ENCODE measurements at regions of chrX and their contacts with region 1.

Region 1: GRCh38 chrX:154486396-154487207 is at the start of gene UBL4A:
- DNase-seq: no peak
- H3K4me3 ChIP-seq: peak within 1 kb of the TSS; percentile 46
- CTCF ChIP-seq: no peak

Region 2: DNA sequence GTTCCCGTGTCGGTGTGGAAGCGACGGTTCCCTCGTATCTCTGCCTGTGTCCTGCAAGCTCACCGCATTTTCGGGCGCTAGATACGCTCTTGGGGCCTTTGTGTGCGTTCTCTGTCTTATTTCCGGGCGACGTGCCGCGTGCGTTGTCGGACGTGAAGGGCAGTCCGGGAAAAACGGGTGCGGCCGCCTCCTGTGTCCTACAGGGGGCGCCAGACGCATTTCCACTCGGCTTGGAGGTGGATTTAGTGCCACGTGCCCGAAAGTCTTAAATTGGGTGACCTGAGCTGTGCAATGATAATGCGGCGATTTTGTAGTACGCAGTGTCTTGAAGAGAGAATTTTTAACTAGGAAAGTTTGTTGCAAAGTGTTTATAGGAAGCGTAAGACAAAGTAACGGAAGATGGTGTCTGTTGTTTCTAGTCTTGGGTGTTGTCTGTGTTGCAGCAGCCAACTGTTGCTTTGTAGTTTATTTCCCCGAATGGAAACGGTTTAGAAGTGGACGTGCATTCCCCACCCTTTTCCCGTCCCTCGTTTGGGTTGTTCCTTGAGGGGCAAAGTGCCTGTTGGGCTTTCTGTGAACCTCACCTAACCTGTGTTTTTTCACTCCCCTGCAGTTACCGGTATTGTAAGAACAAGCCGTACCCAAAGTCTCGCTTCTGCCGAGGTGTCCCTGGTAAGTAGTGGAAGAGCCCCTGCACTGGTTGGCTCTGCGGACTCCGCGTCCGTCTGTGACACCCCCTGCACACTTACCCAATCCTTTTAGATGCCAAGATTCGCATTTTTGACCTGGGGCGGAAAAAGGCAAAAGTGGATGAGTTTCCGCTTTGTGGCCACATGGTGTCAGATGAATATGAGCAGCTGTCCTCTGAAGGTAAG is 87.6 kb before region 1 on chrX:
- in situ Hi-C with region 1: no loop called
- DNase-seq: peak; percentile 69
- H3K4me3 ChIP-seq: peak overlapping the region; percentile 88
- CTCF ChIP-seq: peak; percentile 74

Region 3: DNA sequence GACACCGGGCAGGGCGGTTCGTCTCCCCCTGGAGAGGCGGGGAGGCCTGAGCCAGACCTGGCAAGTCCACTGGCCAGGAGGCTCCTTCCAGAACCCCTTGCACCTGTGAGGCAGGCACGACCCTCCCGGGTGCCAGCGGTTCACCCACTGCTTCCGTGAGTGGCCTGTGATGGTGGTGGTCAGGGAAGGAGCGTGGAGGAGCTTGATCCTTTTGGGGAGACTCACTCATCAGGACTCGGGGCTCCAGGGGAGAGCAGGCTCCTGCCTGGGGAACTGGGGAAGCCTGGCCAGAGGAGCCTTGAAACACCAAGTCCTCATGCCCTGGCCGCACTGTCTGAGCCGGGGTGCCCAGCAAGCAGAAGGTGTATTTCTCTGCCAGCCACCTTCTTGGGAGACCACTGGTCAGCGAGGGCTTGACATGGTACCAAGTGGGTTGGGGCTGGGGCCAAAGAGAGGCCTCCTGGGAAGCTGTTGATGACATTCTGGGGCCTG is 41.8 kb before region 1 on chrX:
- in situ Hi-C with region 1: loop called (anchors 5 kb)
- DNase-seq: no peak
- H3K4me3 ChIP-seq: peak overlapping the region; percentile 54
- CTCF ChIP-seq: no peak

Region 4: DNA sequence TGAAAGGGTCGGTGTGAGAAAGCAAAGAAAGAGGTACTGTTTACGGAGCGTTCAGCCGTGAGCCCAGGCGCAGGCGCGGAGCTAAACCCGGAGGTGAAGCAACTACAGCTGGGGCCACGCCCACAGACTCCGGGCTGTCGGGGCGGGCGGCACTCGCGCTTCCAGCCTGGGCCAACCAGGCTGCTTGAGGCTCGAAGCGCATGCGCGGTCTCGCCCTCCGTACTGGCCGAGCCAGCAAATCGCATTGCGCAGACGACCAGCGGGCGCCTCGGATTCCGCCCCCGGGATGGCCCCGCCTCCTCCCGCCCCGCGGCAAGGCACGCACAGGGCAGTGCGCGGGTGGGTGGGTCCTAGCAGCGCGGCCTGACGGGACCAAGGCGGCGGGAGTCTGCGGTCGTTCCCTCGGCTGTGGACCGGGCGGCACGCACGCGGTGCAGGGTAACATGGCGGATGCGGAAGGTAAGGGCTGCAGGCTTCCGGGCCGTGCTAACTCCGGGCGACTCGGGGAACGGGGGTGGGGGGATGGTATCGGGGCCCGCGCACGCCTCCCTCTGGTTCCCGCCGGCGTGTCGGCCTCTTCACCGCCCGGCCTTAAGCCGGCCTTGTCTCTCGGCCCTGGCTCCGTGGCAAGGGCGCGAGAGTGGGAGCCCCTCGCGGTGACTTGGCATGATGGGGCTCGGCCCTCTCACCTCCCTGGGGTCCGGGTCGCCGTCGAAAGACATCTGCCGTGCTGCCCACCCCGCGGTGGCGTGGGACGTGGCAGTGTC is 276.1 kb after region 1 on chrX and contains the start of gene DKC1:
- in situ Hi-C with region 1: no loop called
- DNase-seq: peak; percentile 84
- H3K4me3 ChIP-seq: peak within 1 kb of the TSS; percentile 61
- CTCF ChIP-seq: no peak

Measured in astrocyte of the cerebellum (primary cell).